ENCODE measurements at regions of chr1 and their contacts with region 1.

Region 1: DNA sequence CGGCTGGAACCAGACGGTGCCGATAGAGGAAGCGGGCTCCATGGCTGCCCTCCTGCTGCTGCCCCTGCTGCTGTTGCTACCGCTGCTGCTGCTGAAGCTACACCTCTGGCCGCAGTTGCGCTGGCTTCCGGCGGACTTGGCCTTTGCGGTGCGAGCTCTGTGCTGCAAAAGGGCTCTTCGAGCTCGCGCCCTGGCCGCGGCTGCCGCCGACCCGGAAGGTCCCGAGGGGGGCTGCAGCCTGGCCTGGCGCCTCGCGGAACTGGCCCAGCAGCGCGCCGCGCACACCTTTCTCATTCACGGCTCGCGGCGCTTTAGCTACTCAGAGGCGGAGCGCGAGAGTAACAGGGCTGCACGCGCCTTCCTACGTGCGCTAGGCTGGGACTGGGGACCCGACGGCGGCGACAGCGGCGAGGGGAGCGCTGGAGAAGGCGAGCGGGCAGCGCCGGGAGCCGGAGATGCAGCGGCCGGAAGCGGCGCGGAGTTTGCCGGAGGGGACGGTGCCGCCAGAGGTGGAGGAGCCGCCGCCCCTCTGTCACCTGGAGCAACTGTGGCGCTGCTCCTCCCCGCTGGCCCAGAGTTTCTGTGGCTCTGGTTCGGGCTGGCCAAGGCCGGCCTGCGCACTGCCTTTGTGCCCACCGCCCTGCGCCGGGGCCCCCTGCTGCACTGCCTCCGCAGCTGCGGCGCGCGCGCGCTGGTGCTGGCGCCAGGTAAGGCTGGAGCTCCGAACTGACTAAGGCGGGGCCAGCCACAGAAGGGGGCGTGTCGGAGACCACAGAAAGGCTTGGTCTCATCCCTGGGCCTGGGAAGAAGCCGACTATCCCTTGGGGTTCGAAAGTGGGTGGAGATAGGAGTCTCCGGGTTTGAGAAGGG is 486 bp downstream of the SLC27A3 start:
- DNase-seq: peak; percentile 66
- CTCF ChIP-seq: no peak

Region 2: GRCh38 chr1:153705485-153705884 is 70.2 kb before region 1 on chr1:
- CTCF ChIA-PET with region 1: no interaction called
- POLR2A ChIA-PET with region 1: no interaction called
- DNase-seq: no peak
- CTCF ChIP-seq: no peak

Region 3: DNA sequence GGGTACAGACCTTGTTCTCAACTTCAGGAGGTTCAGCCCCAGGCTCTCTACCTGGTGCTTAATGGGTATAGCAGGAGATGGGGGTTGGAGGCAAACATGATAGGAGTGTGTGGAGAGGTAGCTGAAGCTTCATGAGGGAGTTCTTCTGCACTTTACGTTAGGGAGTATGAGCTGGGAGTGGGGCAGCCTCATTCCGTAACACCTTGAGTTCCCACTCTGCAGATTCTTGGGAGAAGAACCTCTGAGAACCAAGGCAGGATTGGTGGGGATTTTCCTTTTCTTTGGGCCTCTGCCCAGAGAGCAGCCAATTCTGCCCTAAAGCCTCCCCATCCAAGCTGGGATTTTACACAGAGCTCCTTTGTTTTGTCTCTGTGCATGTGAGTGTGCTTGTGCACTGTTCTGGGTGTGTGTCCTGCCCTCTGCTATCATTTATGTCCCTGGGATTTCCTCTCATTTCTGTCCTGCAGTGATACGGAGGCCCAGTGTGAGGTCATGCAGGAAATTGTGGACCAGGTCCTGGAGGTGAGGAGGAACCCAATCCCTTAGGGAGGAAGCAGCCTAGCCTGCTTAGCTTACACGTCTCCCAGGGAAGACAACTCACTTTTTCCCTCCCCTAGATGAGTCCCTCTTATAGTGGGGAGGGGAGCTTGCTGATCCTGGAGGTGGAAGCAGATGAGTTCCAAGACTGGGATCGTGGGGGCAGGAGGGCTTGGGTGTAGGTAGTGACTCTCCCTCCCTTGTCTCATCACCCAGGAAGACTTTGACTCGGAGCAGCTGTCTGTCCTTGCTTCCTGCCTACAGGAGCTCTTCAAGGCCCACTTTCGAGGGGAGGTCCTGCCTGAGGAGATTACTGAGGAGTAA is 12.1 kb before region 1 on chr1:
- CTCF ChIA-PET with region 1: interaction called, 18 read pairs
- POLR2A ChIA-PET with region 1: no interaction called
- DNase-seq: no peak
- CTCF ChIP-seq: no peak

Region 4: GRCh38 chr1:153805042-153805745 is 29.5 kb after region 1 on chr1:
- CTCF ChIA-PET with region 1: no interaction called
- POLR2A ChIA-PET with region 1: no interaction called
- DNase-seq: peak; percentile 89
- CTCF ChIP-seq: no peak

Region 5: DNA sequence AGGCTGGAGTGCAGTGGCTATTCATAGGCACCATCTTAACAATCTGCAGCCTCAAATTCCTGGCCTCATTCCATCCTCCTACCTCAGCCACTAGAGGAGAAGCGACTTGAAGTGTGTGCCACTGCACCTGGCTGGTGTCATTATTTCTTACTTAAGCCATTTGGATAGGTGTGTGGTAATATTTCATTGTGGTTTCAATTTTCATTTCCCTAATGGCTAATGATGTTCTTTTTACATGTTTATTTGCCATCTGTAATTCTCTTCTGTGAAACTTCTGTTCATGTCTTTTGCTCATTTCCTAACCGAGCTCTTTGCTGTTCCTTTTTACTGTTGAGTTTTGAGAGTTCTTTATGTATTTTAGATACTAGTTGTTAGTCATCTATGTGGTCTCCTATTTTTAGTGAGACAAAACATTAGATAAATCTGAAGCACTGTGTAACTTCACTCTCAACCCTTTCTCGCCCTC is 66.3 kb after region 1 on chr1:
- CTCF ChIA-PET with region 1: no interaction called
- POLR2A ChIA-PET with region 1: no interaction called
- DNase-seq: peak; percentile 43
- CTCF ChIP-seq: no peak

Measured in GM10248 (cell line).